AG04450 (cell line): ENCODE measurements at regions of chr1 and their contacts with region 1.

Region 1: DNA sequence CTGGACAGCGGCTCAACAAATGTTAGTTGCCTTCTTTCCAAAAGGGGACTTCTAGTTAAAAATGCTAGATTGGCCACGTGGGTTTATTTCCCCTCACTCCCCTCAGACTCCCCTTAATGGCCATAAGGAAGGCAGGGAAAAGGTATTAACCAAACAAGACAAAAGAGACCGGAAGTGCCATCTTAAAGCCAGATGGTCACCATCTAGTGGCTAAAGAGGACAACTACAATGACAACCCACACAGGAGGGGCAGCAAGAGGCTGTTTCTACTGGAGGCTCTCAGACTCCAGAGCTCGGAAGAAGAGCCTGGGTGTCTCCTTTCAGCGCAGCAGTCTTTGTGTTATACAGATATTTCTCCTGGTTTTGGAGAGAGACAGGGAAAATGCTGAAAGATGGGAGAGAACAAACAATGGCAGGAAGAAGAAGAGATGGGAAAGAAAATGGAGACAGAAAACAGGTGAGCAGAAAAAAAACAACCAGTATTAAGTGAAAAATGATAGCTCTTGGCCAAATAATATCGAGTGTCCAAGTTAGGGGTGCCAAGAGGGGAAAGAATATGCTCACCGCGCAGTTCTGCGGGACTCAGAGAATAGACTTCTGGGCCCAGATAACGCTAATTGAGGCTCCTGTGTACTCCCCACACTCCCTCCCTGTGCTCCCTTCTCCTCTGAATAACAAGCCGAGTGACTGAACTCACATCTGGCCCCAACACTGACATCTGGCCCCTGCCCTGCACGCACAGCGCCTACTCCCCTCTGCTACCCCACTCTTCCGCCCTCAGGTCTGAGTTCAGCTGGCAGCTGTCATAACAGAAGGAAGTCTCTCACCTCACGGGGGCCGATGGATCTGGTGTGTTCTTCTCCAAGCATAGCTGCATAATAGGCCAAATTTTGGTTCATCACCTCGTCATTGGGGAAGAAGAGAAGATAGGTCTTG is 9.6 kb downstream of the P3H1 start:
- DNase-seq: peak; percentile 39
- H3K4me3 ChIP-seq: no peak overlapping the region
- H3K27ac ChIP-seq: no peak overlapping the region
- H3K27me3 ChIP-seq: no peaks in the 10 kb centered on the region
- CTCF ChIP-seq: peak; percentile 66

Region 2: DNA sequence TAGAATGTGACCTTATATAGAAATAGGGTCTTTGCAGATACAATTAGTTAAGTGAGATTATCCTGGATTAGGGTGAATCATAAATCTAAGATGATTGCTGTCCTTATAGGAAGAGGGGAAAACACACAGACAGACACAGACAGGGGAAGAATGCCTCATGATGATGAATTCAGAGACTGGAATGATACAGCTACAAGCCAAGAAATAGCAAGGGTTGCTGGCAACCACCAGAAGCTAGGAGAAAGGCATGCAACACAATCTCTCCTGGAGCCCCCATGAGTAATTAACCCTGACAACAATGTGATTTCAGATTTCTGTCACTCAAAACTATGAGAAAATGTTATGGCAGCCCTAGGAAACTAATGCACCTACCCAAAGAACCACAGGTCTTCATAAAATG is 118.1 kb before region 1 on chr1:
- CTCF ChIA-PET with region 1: no interaction called
- POLR2A ChIA-PET with region 1: no interaction called
- DNase-seq: no peak
- H3K4me3 ChIP-seq: no peak overlapping the region
- H3K27ac ChIP-seq: no peak overlapping the region
- H3K27me3 ChIP-seq: no peaks in the 10 kb centered on the region
- CTCF ChIP-seq: no peak

Region 3: DNA sequence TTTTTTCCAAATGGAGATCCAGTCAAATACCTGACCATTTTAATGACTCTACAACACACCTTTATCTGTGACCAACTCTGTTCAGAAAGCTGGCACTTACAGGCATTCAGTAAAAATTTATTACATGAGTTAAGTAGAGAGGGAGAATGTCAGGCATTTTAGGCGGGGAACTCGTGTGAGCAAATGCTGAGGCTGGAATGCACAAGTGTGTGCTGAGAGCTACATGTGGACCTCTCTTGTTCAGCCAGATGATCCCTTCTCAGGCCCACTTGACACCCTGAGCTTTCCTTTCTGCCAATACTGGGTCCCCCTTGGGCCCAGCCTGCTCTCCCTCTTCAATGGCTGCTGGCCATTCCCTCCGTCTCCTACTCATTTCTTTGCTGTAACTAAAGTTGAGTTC is 87.3 kb before region 1 on chr1:
- CTCF ChIA-PET with region 1: no interaction called
- POLR2A ChIA-PET with region 1: interaction called, 14 read pairs
- DNase-seq: no peak
- H3K4me3 ChIP-seq: no peak overlapping the region
- H3K27ac ChIP-seq: no peak overlapping the region
- H3K27me3 ChIP-seq: no peaks in the 10 kb centered on the region
- CTCF ChIP-seq: no peak

Region 4: GRCh38 chr1:42801832-42802473 is 44.7 kb after region 1 on chr1:
- CTCF ChIA-PET with region 1: no interaction called
- POLR2A ChIA-PET with region 1: no interaction called
- DNase-seq: no peak
- H3K4me3 ChIP-seq: no peak overlapping the region
- H3K27ac ChIP-seq: no peak overlapping the region
- H3K27me3 ChIP-seq: peaks cover 12% of the 10 kb centered on the region
- CTCF ChIP-seq: no peak